ENCODE measurements at regions of chr11 and their contacts with region 1.

Region 1: DNA sequence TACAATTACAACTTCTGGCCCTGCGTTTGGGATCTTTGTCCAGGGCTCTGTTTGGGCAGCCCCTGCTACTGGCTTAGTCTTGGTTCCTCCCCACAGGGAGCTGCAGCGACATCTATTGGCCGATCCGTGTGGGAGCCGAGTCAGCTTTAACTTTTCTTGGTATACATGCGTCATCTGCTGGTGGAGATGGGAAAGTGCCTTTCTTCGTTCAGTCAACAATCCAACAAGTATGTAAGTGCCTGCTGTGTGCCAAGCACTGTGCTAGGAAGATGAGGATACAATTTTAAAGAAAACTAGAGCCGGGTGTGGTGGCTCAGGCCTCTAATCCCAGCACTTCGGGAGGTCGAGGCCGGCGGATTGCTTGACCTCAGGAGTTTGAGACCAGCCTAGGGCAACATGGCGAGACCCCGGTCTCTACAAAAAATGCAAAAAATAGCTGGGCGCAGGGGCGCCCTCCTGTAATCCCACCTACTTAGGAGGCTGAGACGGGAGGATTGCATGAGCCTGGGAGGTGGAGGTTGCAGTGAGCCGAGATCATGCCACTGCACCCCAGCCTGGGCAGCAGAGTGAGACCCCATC is 8.2 kb downstream of the TPBGL start:
- DNase-seq: peak; percentile 94
- ATAC-seq: peak; percentile 89
- H3K4me3 Mint-ChIP-seq: no peak overlapping the region
- H3K27ac Mint-ChIP-seq: no peak overlapping the region
- H3K4me1 Mint-ChIP-seq: no peaks in the 10 kb centered on the region
- H3K27me3 Mint-ChIP-seq: peaks cover 68% of the 10 kb centered on the region
- CTCF ChIP-seq: peak; percentile 86

Region 2: GRCh38 chr11:74929431-74930363 is 319.1 kb before region 1 on chr11:
- CTCF ChIA-PET with region 1: interaction called, 12 read pairs
- POLR2A ChIA-PET with region 1: no interaction called
- DNase-seq: peak; percentile 53
- ATAC-seq: peak; percentile 95
- H3K4me3 Mint-ChIP-seq: no peak overlapping the region
- H3K27ac Mint-ChIP-seq: no peak overlapping the region
- H3K4me1 Mint-ChIP-seq: no peaks in the 10 kb centered on the region
- H3K27me3 Mint-ChIP-seq: no peaks in the 10 kb centered on the region
- CTCF ChIP-seq: peak; percentile 56; the same call in 1 of the 2 replicates

Region 3: GRCh38 chr11:75133976-75134375 is 114.8 kb before region 1 on chr11:
- CTCF ChIA-PET with region 1: interaction called, 18 read pairs
- POLR2A ChIA-PET with region 1: no interaction called
- DNase-seq: no peak
- ATAC-seq: no peak; the same call in 1 of the 2 replicates
- H3K4me3 Mint-ChIP-seq: no peak overlapping the region
- H3K27ac Mint-ChIP-seq: no peak overlapping the region
- H3K4me1 Mint-ChIP-seq: no peaks in the 10 kb centered on the region
- H3K27me3 Mint-ChIP-seq: peaks cover 18% of the 10 kb centered on the region
- CTCF ChIP-seq: no peak

Region 4: DNA sequence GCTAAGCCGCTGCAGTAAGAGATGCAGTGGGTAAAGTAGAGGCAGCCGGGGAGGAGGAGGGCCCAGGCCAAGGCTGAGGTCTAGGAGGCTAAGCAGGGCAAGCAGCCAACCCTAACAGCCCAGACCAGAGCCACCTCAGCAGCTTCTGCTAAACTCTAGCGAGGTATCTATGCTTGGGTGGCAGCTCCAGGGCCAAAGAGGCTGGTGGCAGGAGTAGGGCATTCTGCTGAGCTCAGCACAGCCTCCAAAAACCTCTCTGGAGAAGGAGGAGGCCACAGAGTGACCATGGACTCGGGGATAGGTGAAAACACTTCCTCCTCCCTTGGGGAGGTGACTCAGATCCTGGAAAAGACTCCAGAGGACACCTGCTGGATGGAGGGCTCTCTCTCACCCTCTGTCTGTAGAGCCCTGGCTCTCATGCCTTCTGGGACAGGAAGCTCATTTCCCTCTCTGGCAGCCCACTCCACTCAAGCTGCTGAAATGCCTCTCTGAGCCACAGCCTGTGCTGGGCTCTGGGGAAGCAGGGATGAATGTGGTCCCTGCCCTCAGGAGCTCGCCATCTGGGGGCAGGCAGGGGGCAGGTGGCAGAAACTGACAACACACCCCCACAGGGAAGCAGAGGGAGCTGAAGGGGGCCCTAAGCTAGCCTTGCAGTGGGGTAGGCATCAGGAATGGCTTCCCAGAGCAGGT is 24.7 kb before region 1 on chr11:
- CTCF ChIA-PET with region 1: interaction called, 15 read pairs
- POLR2A ChIA-PET with region 1: no interaction called
- DNase-seq: no peak
- ATAC-seq: peak; percentile 85
- H3K4me3 Mint-ChIP-seq: no peak overlapping the region
- H3K27ac Mint-ChIP-seq: no peak overlapping the region
- H3K4me1 Mint-ChIP-seq: peaks cover 7% of the 10 kb centered on the region; the same call in 1 of the 2 replicates
- H3K27me3 Mint-ChIP-seq: peaks cover under 1% of the 10 kb centered on the region; the same call in 1 of the 2 replicates
- CTCF ChIP-seq: no peak

Region 5: GRCh38 chr11:75263944-75264349 is 15.2 kb after region 1 on chr11:
- CTCF ChIA-PET with region 1: interaction called, 25 read pairs
- POLR2A ChIA-PET with region 1: no interaction called
- DNase-seq: no peak
- ATAC-seq: no peak
- H3K4me3 Mint-ChIP-seq: no peak overlapping the region
- H3K27ac Mint-ChIP-seq: no peak overlapping the region
- H3K4me1 Mint-ChIP-seq: peaks cover 20% of the 10 kb centered on the region
- H3K27me3 Mint-ChIP-seq: peaks cover 17% of the 10 kb centered on the region
- CTCF ChIP-seq: no peak